ENCODE measurements at regions of chr16 and their contacts with region 1.

Region 1: GRCh38 chr16:87636072-87636684 is 33.9 kb downstream of the JPH3 start:
- DNase-seq: peak; percentile 77 to 90 (median 84)
- ATAC-seq: peak; percentile 85 to 97 (median 94)
- H3K4me3 ChIP-seq: peak overlapping the region in 8 of 12 donors; percentile 12 to 41 (median 19)
- H3K27ac ChIP-seq: no peak overlapping the region
- H3K4me1 ChIP-seq: peaks cover 0 to 15% (median 10%) of the 10 kb centered on the region in 12 donors
- H3K27me3 ChIP-seq: peaks cover 0 to 26% (median 3%) of the 10 kb centered on the region in 9 donors
- CTCF ChIP-seq: peak; percentile 41 to 77 (median 68)
- POLR2A ChIP-seq: no peak

Region 2: DNA sequence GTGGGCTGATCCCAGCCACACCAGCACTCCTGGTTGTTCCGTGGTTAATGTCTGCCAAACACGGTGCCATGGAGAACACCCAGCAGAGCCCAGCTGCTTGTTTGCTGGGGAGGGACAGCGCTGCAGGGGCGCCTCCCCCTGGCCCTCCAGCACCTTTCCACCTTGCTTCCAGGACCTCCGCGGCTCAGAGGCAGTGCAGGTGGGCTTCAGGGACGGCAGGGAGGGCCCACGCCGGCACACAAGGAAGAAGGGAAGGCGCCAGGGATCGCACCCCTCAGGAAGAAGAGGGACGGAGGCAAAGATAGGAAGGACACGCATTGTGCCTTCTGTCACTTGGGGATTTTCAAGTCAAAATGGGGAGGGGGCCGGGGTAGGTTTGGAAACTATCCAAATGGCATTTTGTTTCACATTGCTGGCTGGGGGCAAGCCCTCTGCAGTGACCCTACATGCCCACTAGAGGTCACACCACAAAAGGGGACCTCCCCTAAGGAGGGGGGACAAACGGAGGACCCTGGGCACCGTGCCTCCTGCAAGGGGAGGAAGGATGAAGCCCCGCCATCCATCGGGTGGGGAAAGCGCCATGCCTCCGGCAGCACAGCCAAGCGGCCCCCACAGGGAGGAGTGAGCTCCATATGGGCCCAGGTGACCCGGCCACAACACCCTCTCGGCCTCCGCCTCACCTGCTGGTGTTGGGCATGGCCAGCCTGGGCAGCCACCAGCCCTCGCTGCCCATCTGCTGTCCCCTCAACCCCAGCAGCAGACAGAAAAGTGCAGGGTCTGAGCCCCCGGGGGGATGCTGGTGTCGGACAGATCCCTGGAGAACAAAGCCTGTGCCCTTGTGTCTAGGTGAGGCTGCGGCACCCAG is 311.5 kb before region 1 on chr16:
- intact Hi-C with region 1: loop called in 4 of 10 experiments (anchors 10 kb)
- DNase-seq: peak in 2 of 5 donors; percentile 38 to 61
- ATAC-seq: peak in 3 of 4 donors; percentile 47 to 58 (median 54)
- H3K4me3 ChIP-seq: no peak overlapping the region
- H3K27ac ChIP-seq: no peak overlapping the region
- H3K4me1 ChIP-seq: peaks cover 0 to 33% (median 6%) of the 10 kb centered on the region in 12 donors
- H3K27me3 ChIP-seq: no peaks in the 10 kb centered on the region
- CTCF ChIP-seq: peak; percentile 72 to 91 (median 82)
- POLR2A ChIP-seq: no peak

Region 3: GRCh38 chr16:87410968-87411367 is 225.2 kb before region 1 on chr16:
- intact Hi-C with region 1: loop called in 8 of 10 experiments (anchors 5 to 10 kb)
- DNase-seq: no peak
- ATAC-seq: no peak
- H3K4me3 ChIP-seq: no peak overlapping the region
- H3K27ac ChIP-seq: no peak overlapping the region
- H3K4me1 ChIP-seq: peaks cover 0 to 21% (median 0%) of the 10 kb centered on the region in 12 donors
- H3K27me3 ChIP-seq: no peaks in the 10 kb centered on the region
- CTCF ChIP-seq: peak in 1 of 12 donors; percentile 3
- POLR2A ChIP-seq: no peak

Region 4: GRCh38 chr16:87550496-87550961 is 85.6 kb before region 1 on chr16:
- intact Hi-C with region 1: loop called in 2 of 10 experiments (anchors 2 to 10 kb)
- DNase-seq: peak; percentile 42 to 78 (median 48)
- ATAC-seq: peak; percentile 33 to 50 (median 48)
- H3K4me3 ChIP-seq: no peak overlapping the region
- H3K27ac ChIP-seq: no peak overlapping the region
- H3K4me1 ChIP-seq: peaks cover 0 to 7% (median 0%) of the 10 kb centered on the region in 12 donors
- H3K27me3 ChIP-seq: peaks cover 0 to 15% (median 0%) of the 10 kb centered on the region in 9 donors
- CTCF ChIP-seq: peak; percentile 80 to 98 (median 92)
- POLR2A ChIP-seq: no peak

Region 5: DNA sequence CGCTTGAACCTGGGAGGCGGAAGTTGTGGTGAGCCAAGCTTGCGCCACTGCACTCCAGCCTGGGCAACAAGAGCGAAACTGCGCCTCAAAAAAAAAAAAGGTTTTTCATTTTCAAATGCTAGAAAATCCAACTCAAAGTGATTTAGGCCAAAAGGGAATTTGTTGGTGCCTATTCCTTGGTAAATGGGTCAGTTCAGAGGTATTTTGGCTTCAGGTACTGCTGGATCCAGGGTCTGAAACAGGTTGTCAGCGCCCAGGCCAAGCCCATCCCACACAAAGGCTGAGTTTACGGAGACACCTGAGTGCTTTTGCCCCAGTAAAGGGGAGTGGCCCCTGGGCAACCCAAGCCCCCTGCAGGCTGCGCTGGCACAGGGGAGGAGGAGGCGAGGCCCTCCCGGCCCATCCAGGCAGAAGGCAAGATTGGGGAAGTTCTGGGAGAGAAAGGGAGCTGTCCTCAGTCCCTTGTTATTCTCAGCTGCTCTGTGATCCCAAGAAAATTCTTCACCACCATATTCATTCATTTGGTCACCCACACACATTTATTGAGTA is 42.4 kb before region 1 on chr16:
- intact Hi-C with region 1: loop called in 8 of 10 experiments (anchors 1 to 5 kb)
- DNase-seq: no peak
- ATAC-seq: no peak
- H3K4me3 ChIP-seq: no peak overlapping the region
- H3K27ac ChIP-seq: no peak overlapping the region
- H3K4me1 ChIP-seq: peaks cover 0 to 5% (median 4%) of the 10 kb centered on the region in 12 donors
- H3K27me3 ChIP-seq: peaks cover 0 to 41% (median 10%) of the 10 kb centered on the region in 9 donors
- CTCF ChIP-seq: no peak
- POLR2A ChIP-seq: no peak

Measured in heart left ventricle (tissue), 16 donors.